ENCODE measurements at regions of chr11 and their contacts with region 1.

Region 1: DNA sequence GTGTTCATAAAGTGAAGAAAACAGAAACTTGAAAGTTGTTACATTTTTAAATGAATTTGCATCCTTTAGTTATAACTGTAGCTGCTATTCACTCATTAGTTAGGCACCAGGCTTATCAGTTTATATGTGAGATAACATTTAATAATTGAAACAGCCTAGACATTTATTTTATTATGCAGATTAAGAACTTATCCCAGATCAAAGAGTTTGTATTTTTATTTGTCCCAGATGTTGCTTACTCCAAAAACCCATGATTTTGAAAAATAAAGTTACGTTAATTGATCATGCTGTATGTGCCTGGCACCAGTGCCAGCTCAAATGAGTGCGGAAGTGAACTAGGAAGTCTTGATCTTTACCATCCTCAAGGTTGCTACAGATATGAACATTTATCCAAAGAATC is 172.7 kb upstream of the CARD18 start:
- DNase-seq: no peak
- H3K4me3 ChIP-seq: no peak overlapping the region
- H3K27ac ChIP-seq: no peak overlapping the region
- H3K4me1 ChIP-seq: no peaks in the 10 kb centered on the region
- H3K27me3 ChIP-seq: no peaks in the 10 kb centered on the region
- CTCF ChIP-seq: no peak
- EP300 ChIP-seq: no peak
- POLR2A ChIP-seq: no peak

Region 2: DNA sequence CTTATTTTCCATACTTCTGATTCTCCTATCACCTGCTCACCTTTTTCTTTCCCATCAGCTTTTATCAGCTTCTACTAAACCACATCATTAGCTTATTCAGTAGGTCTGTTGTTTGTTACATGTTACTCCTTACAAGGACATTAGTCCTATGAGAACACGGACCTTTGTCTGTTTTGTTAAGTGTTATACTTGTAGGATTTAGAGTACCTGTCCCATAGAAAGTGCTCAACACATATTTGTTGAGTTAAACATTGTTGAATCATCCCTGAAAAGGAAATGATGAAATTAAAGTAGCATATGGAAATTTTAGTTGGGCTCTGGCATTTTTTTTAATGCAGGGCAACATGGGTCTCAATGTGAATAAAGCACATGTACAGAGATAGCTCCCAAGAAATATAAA is 49.4 kb after region 1 on chr11:
- in situ Hi-C with region 1: no loop called
- intact Hi-C with region 1: loop called (anchors 2 kb)
- DNase-seq: no peak
- H3K4me3 ChIP-seq: no peak overlapping the region
- H3K27ac ChIP-seq: no peak overlapping the region
- H3K4me1 ChIP-seq: no peaks in the 10 kb centered on the region
- H3K27me3 ChIP-seq: no peaks in the 10 kb centered on the region
- CTCF ChIP-seq: no peak
- EP300 ChIP-seq: no peak
- POLR2A ChIP-seq: no peak